OCI-LY7 (cell line): ENCODE measurements at regions of chr6 and their contacts with region 1.

Region 1: DNA sequence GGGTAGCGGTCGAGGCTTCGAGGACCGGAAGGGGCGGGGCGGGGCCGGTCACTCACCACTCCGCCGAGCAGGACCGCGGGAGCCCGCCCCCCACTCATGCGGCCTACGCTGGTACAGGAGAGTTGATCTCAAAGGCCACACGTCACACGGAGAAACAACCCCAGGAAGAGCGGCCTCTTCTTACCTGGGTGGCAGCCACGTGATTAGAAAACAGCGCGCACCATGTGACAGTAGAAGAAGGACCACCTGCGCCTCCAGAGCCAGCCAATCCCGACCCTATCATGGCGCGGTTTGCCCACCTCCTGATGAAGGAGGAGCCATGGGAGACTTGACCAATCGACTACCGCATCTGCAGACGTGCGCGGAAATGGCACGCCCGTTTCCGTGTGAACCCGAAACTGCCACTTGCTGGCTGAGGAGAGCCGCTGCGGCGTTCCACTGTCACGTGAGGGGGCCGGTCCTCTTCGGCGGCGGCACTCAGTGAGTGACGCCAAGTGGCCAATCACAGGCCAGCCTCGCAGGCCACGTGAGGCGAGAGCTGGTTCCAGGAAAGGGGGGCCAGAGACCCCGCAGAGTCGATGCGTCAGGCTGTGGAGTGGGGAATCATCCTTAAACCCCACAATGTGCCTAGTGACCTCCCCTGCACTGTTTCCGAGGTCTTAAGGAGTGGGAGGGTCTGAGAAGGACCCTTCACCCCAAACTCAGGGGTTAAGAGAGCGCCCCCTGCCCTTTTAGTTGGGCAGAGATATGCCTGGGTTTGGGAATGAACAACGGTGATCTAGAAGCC is at the start of gene CUTA:
- DNase-seq: peak; percentile 100
- H3K4me3 ChIP-seq: peak within 1 kb of the TSS; percentile 77
- H3K27ac ChIP-seq: peak within 1 kb of the TSS; percentile 76
- H3K4me1 ChIP-seq: peaks cover 56% of the 10 kb centered on the region
- CTCF ChIP-seq: peak; percentile 80
- total RNA-seq, gene CUTA: 147 and 164 TPM in 2 replicates

Region 2: GRCh38 chr6:33570806-33571636 is 152.9 kb after region 1 on chr6:
- CTCF ChIA-PET with region 1: no interaction called
- POLR2A ChIA-PET with region 1: no interaction called
- intact Hi-C with region 1: loop called (anchors 2 kb)
- DNase-seq: peak; percentile 94
- H3K4me3 ChIP-seq: peak overlapping the region; percentile 69
- H3K27ac ChIP-seq: peak overlapping the region; percentile 95
- H3K4me1 ChIP-seq: peaks cover 22% of the 10 kb centered on the region
- CTCF ChIP-seq: 0 out of 2 replicates have a peak, but pooled peaks have one; percentile 15